ENCODE measurements at regions of chr7 and their contacts with region 1.

Region 1: GRCh38 chr7:36473454-36474282 is 84.0 kb downstream of the ANLN start:
- DNase-seq: no peak
- H3K4me3 Mint-ChIP-seq: no peak overlapping the region
- H3K27ac Mint-ChIP-seq: no peak overlapping the region
- H3K4me1 Mint-ChIP-seq: peaks cover 19% of the 10 kb centered on the region
- H3K27me3 Mint-ChIP-seq: no peaks in the 10 kb centered on the region

Region 2: GRCh38 chr7:36244429-36244828 is 229.2 kb before region 1 on chr7:
- intact Hi-C with region 1: no loop called
- DNase-seq: no peak
- H3K4me3 Mint-ChIP-seq: no peak overlapping the region
- H3K27ac Mint-ChIP-seq: no peak overlapping the region
- H3K4me1 Mint-ChIP-seq: no peaks in the 10 kb centered on the region
- H3K27me3 Mint-ChIP-seq: no peaks in the 10 kb centered on the region

Region 3: DNA sequence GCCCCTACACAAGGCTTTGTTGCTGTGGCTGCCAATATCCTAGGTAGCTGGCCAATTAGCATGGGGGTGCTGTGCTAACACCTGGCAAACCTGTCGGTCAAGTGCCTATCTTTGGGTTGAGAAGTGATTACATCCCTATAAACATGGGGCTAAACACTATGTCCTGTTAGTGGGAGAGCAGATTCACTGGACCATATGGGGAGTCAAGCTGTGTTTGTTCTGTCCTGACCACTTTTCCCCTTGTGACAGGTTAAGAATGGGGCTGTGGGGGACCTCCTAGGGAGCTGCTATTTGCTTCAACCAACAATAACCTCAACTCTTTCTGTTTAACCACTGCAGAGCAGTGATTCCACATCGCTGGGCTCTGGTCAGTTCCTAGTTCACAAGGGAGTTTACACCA is 402.1 kb after region 1 on chr7:
- intact Hi-C with region 1: no loop called
- DNase-seq: no peak
- H3K4me3 Mint-ChIP-seq: no peak overlapping the region
- H3K27ac Mint-ChIP-seq: no peak overlapping the region
- H3K4me1 Mint-ChIP-seq: peaks cover 34% of the 10 kb centered on the region
- H3K27me3 Mint-ChIP-seq: no peaks in the 10 kb centered on the region

Region 4: DNA sequence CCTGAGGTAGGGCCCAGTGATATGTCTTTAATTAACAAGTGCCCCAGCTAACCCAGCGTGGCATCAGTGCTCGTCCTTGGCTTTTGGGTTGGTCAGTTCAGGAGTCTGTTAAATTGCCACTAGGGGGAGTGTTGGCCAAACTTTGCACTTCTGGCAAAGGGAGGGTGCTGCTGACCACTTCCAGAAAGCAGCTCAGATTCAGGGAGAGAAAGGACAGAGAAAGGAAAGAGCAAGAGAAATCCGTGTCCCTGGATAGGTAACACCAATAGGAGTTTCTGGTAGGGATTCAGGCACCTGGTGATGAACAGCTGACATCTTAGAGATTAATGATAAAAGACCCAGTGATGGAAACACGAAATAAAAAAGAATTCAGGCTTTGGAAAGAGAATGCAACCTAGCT is 493.7 kb after region 1 on chr7:
- intact Hi-C with region 1: loop called (anchors 10 kb)
- DNase-seq: no peak
- H3K4me3 Mint-ChIP-seq: no peak overlapping the region
- H3K27ac Mint-ChIP-seq: no peak overlapping the region
- H3K4me1 Mint-ChIP-seq: peaks cover 45% of the 10 kb centered on the region
- H3K27me3 Mint-ChIP-seq: no peaks in the 10 kb centered on the region

Measured in activated T-helper 1 cell treated with anti-CD3 and anti-CD28 coated beads, Interleukin-12 subunit alpha, Interleukin-12 subunit beta, Interleukin-2, Interleukin-4 antibody, amounts not matched to agents 30 ng/mL and 10 ng/mL and 1 ng/mL, durations not matched to agents 14 hours and 24 hours and 36 hours (primary cell).